CD4-positive, alpha-beta T cell (primary cell): ENCODE measurements at regions of chr17 and their contacts with region 1.

Region 1: GRCh38 chr17:13024526-13025257 is 6.9 kb upstream of the ELAC2 start:
- DNase-seq: peak; percentile 39 to 82 (median 54)
- ATAC-seq: peak; percentile 100
- H3K4me3 ChIP-seq: peak overlapping the region; percentile 16
- H3K4me3 Mint-ChIP-seq: no peak overlapping the region
- H3K27ac ChIP-seq: no peak overlapping the region
- H3K27ac Mint-ChIP-seq: no peak overlapping the region
- H3K4me1 ChIP-seq: peaks cover 9% of the 10 kb centered on the region
- H3K4me1 Mint-ChIP-seq: peaks cover 6% of the 10 kb centered on the region
- H3K27me3 ChIP-seq: no peaks in the 10 kb centered on the region
- H3K27me3 Mint-ChIP-seq: peaks cover 17% of the 10 kb centered on the region
- CTCF ChIP-seq: peak; percentile 98

Region 2: GRCh38 chr17:13086142-13086769 is 61.6 kb after region 1 on chr17:
- CTCF ChIA-PET with region 1: no interaction called
- POLR2A ChIA-PET with region 1: no interaction called
- intact Hi-C with region 1: no loop called
- DNase-seq: no peak
- ATAC-seq: no peak
- H3K4me3 ChIP-seq: no peak overlapping the region
- H3K4me3 Mint-ChIP-seq: no peak overlapping the region
- H3K27ac ChIP-seq: no peak overlapping the region
- H3K27ac Mint-ChIP-seq: no peak overlapping the region
- H3K4me1 ChIP-seq: peaks cover 4% of the 10 kb centered on the region
- H3K4me1 Mint-ChIP-seq: peaks cover 12% of the 10 kb centered on the region
- H3K27me3 ChIP-seq: no peaks in the 10 kb centered on the region
- H3K27me3 Mint-ChIP-seq: peaks cover 5% of the 10 kb centered on the region
- CTCF ChIP-seq: no peak

Region 3: GRCh38 chr17:13306310-13306962 is 281.7 kb after region 1 on chr17:
- CTCF ChIA-PET with region 1: no interaction called
- POLR2A ChIA-PET with region 1: no interaction called
- intact Hi-C with region 1: no loop called
- DNase-seq: peak in 2 of 14 experiments; percentile 1 to 2
- ATAC-seq: no peak
- H3K4me3 ChIP-seq: no peak overlapping the region
- H3K4me3 Mint-ChIP-seq: no peak overlapping the region
- H3K27ac ChIP-seq: no peak overlapping the region
- H3K27ac Mint-ChIP-seq: no peak overlapping the region
- H3K4me1 ChIP-seq: no peaks in the 10 kb centered on the region
- H3K4me1 Mint-ChIP-seq: no peaks in the 10 kb centered on the region
- H3K27me3 ChIP-seq: peaks cover 0 to 5% of the 10 kb centered on the region in 2 experiments
- H3K27me3 Mint-ChIP-seq: no peaks in the 10 kb centered on the region
- CTCF ChIP-seq: no peak

Region 4: GRCh38 chr17:14069251-14070021 is 1044.7 kb after region 1 on chr17 and contains the start of gene COX10:
- CTCF ChIA-PET with region 1: no interaction called
- POLR2A ChIA-PET with region 1: no interaction called
- intact Hi-C with region 1: loop called in 1 of 2 experiments (anchors 10 kb)
- DNase-seq: peak; percentile 68 to 88 (median 80)
- ATAC-seq: peak; percentile 99
- H3K4me3 ChIP-seq: peak within 1 kb of the TSS; percentile 89
- H3K4me3 Mint-ChIP-seq: peak within 1 kb of the TSS; percentile 97
- H3K27ac ChIP-seq: peak within 1 kb of the TSS; percentile 57 to 68
- H3K27ac Mint-ChIP-seq: peak within 1 kb of the TSS; percentile 92
- H3K4me1 ChIP-seq: peaks cover 22% of the 10 kb centered on the region
- H3K4me1 Mint-ChIP-seq: peaks cover 61% of the 10 kb centered on the region
- H3K27me3 ChIP-seq: no peaks in the 10 kb centered on the region
- H3K27me3 Mint-ChIP-seq: no peaks in the 10 kb centered on the region
- CTCF ChIP-seq: no peak
- total RNA-seq, gene COX10: 9.1 to 9.9 TPM